Activated CD8-positive, alpha-beta T cell treated with anti-CD3 and anti-CD28 coated beads for 36 hours (primary cell): ENCODE measurements at regions of chrX and their contacts with region 1.

Region 1: GRCh38 chrX:135985141-135985972 is at the start of gene SLC9A6:
- DNase-seq: peak; percentile 70
- ATAC-seq: peak; percentile 84
- H3K4me3 Mint-ChIP-seq: peak within 1 kb of the TSS; percentile 88
- H3K27ac Mint-ChIP-seq: peak within 1 kb of the TSS; percentile 87
- H3K4me1 Mint-ChIP-seq: peaks cover 56% of the 10 kb centered on the region
- H3K27me3 Mint-ChIP-seq: no peaks in the 10 kb centered on the region
- CTCF ChIP-seq: no peak
- total RNA-seq, gene SLC9A6: 8.7 to 11.3 TPM

Region 2: DNA sequence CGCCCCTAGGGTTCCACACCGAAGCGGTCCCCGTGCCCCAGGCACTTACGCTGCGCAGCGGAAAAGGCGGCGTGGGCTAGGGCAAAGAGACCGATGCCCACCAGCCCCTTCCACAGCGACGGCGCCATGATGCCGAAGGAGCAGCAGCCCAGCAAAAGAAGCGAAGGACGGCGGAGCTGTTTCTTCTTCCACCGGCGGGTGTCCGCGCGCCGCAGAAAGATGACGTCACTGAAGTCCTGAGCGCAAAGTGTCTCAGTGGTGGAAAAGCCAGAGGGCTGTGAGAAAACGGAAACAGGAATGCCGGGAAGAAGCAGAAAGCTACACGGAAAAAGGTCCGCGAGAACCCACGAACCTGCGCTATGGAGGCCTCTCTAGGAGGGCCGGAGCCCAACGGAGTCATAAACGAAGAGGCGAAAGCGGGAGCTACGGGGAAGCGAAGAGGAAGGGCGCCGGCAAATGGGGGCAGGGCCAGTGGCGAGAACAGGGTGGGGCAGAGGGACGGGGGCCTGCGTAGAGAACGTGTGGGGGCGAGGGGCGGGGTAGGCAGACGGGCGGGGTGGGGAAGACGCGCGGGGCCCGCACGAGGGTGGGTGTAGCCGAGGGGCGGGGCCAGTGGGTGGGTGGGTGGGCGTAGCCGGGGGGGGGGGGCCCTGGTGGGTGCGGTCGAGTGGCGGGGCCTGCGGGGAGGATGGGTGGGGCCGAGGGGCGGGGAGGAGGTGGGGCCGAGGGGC is 11.6 kb before region 1 on chrX and contains the start of gene MMGT1:
- CTCF ChIA-PET with region 1: interaction called, 4 read pairs
- POLR2A ChIA-PET with region 1: interaction called, 14 read pairs
- intact Hi-C with region 1: no loop called
- DNase-seq: peak; percentile 87
- ATAC-seq: peak; percentile 91
- H3K4me3 Mint-ChIP-seq: peak within 1 kb of the TSS; percentile 90
- H3K27ac Mint-ChIP-seq: peak within 1 kb of the TSS; percentile 99
- H3K4me1 Mint-ChIP-seq: peaks cover 24% of the 10 kb centered on the region
- H3K27me3 Mint-ChIP-seq: no peaks in the 10 kb centered on the region
- CTCF ChIP-seq: no peak
- total RNA-seq, gene MMGT1: 15.5 to 15.6 TPM